Endothelial cell of umbilical vein (primary cell): ENCODE measurements at regions of chrX and their contacts with region 1.

Region 1: GRCh38 chrX:153818571-153819383 is 11.6 kb downstream of the PDZD4 start:
- DNase-seq: peak; percentile 23
- H3K4me3 ChIP-seq: peak overlapping the region in 1 of 3 experiments; percentile 35
- H3K27ac ChIP-seq: no peak overlapping the region
- H3K4me1 ChIP-seq: peaks cover 4% of the 10 kb centered on the region
- H3K27me3 ChIP-seq: no peaks in the 10 kb centered on the region
- CTCF ChIP-seq: no peak
- POLR2A ChIP-seq: no peak

Region 2: GRCh38 chrX:153214934-153215333 is 603.8 kb before region 1 on chrX:
- CTCF ChIA-PET with region 1: no interaction called
- POLR2A ChIA-PET with region 1: no interaction called
- dilution Hi-C with region 1: no loop called
- intact Hi-C with region 1: no loop called
- DNase-seq: no peak
- H3K4me3 ChIP-seq: no peak overlapping the region
- H3K27ac ChIP-seq: no peak overlapping the region
- H3K4me1 ChIP-seq: no peaks in the 10 kb centered on the region
- H3K27me3 ChIP-seq: no peaks in the 10 kb centered on the region
- CTCF ChIP-seq: no peak
- POLR2A ChIP-seq: no peak

Region 3: GRCh38 chrX:153592966-153593688 is 225.7 kb before region 1 on chrX:
- CTCF ChIA-PET with region 1: no interaction called
- POLR2A ChIA-PET with region 1: no interaction called
- dilution Hi-C with region 1: no loop called
- intact Hi-C with region 1: no loop called
- DNase-seq: no peak
- H3K4me3 ChIP-seq: no peak overlapping the region
- H3K27ac ChIP-seq: no peak overlapping the region
- H3K4me1 ChIP-seq: no peaks in the 10 kb centered on the region
- H3K27me3 ChIP-seq: no peaks in the 10 kb centered on the region
- CTCF ChIP-seq: no peak
- POLR2A ChIP-seq: no peak

Region 4: DNA sequence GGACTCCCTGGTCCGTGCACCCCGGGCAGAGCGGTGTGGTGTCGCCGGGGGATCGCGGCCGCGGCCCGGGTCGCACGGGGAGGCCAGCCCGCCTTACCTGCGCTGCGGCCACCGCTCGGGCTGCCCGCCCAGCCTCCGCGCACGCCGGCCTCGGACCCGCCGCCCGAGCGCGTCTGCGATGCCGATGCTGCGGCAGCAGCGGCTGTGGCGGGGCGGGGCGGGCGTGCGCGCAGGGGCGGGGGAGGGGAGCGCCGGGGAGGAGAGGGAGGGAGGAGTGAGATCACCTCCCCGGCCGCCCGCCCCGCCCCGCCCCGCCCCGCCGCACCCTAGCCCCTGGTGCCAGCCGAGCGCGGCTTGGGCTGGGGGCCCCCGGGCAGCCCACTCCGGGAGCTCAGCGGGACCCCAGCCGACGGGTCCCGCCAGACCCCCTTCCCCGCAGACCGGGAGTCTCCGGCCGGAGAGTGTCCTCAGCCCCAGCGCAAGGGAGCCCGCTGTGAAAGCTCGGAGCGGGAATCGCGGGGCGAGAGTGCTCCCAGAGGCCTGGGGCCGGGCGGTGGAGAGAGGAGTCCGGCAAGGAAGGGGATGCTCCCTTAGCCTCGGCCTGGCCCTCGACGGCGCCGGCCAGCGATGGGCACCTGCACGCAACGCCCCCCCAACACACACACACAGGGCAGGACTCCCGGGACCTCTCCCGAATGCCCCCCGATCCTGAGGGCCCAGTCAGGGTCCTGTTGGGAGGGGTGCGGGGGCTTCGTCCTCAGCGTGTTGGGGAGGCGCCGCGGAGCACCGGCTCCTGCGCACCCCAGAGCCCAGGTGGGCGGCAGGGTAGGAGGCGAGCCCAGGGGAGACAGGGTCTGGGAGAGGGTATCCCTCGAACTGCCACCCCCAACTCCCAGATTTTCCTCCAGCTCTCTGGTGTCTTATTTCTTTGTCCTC is 67.5 kb after region 1 on chrX and contains the start of gene L1CAM:
- CTCF ChIA-PET with region 1: no interaction called
- POLR2A ChIA-PET with region 1: no interaction called
- dilution Hi-C with region 1: no loop called
- intact Hi-C with region 1: loop called (anchors 10 kb)
- DNase-seq: no peak
- H3K4me3 ChIP-seq: no peak within 1 kb of the TSS
- H3K27ac ChIP-seq: no peak within 1 kb of the TSS
- H3K4me1 ChIP-seq: no peaks in the 10 kb centered on the region
- H3K27me3 ChIP-seq: peaks cover 28 to 32% of the 10 kb centered on the region in 2 experiments
- CTCF ChIP-seq: no peak
- POLR2A ChIP-seq: no peak
- total RNA-seq, gene L1CAM: not detected in 2 replicates